Spleen (tissue), 13 donors: ENCODE measurements at regions of chrX and their contacts with region 1.

Region 1: DNA sequence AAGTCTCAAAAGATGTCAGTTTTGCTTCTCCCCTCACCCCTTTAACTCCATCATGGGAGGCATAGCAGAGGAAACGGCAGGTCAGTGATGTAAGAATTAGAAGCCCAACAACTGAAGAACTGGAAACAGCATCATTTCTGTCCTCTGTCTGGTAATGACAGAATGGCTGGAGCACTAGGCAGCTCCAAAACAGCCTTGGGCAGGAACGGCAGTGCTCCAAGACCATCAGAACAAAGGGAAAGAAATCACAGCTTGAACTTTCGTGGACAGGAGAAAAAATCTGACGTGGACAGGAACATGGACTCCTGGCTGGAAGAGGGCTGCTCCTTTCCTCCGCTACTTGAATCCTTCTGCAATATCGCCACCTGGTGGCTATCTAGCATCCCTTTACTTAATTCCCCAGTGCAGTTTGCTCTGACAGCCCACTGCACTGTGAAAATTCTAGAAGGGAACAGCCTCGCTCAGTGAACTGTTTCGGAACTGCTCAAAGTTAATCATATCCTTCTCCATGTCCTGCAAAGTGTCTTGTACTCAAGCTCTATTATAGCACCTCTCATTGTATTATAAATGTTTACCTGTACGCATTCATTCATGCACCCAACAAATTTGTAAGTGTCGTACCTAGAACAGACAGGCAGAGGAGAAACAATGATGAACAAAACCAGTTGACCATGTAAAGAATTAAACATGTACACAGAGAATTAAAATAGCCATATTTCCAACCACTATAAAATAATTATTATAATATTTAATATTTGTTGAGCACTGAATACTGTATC is 20.4 kb downstream of the SLC25A53 start:
- DNase-seq: no peak
- H3K4me3 ChIP-seq: peak overlapping the region in 3 of 8 donors; percentile 20 to 45 (median 27)
- H3K27ac ChIP-seq: peak overlapping the region in 1 of 8 donors; percentile 47
- H3K4me1 ChIP-seq: peaks cover 0 to 28% (median 7%) of the 10 kb centered on the region in 6 donors
- H3K27me3 ChIP-seq: peaks cover 0 to 12% (median 0%) of the 10 kb centered on the region in 7 donors
- CTCF ChIP-seq: peak; percentile 50 to 84 (median 70)
- POLR2A ChIP-seq: no peak

Region 2: GRCh38 chrX:103651151-103651783 is 485.2 kb before region 1 on chrX:
- intact Hi-C with region 1: no loop called
- DNase-seq: no peak
- H3K4me3 ChIP-seq: no peak overlapping the region
- H3K27ac ChIP-seq: no peak overlapping the region
- H3K4me1 ChIP-seq: no peaks in the 10 kb centered on the region
- H3K27me3 ChIP-seq: no peaks in the 10 kb centered on the region
- CTCF ChIP-seq: no peak
- POLR2A ChIP-seq: no peak

Region 3: GRCh38 chrX:103845165-103845653 is 291.2 kb before region 1 on chrX:
- intact Hi-C with region 1: loop called (anchors 10 kb)
- DNase-seq: no peak
- H3K4me3 ChIP-seq: no peak overlapping the region
- H3K27ac ChIP-seq: no peak overlapping the region
- H3K4me1 ChIP-seq: no peaks in the 10 kb centered on the region
- H3K27me3 ChIP-seq: peaks cover 0 to 17% (median 0%) of the 10 kb centered on the region in 7 donors
- CTCF ChIP-seq: peak in 10 of 11 experiments; percentile 18 to 57 (median 47)
- POLR2A ChIP-seq: no peak